ENCODE measurements at regions of chr20 and their contacts with region 1.

Region 1: DNA sequence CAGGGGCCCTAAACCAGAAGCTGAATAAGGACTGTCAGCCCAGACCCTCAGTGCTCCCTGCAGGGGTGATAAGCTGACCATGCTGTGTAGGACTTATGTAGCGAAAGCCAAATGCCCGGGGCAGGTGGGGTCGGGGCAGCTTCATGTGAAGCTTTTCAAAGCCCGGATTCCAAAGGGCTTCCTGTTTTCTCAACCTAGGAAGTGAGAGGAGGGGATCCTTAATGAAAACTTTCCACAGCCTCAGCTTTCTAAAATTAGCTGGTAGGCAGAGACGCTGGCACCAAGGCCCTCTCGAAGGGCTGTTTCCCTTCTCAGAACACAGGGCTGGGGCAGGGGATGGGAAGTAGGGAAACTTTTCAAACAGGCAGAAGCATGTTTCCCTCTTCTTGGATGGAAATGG is 148.9 kb downstream of the NFATC2 start:
- DNase-seq: peak; percentile 28
- ATAC-seq: peak; percentile 27 to 76 (median 43)
- H3K4me3 ChIP-seq: no peak overlapping the region
- H3K27ac ChIP-seq: peak overlapping the region in 7 of 10 donors; percentile 24 to 61 (median 49)
- H3K4me1 ChIP-seq: peaks cover 6 to 86% (median 49%) of the 10 kb centered on the region in 9 donors
- H3K27me3 ChIP-seq: no peaks in the 10 kb centered on the region
- CTCF ChIP-seq: no peak

Region 2: GRCh38 chr20:51492167-51493092 is 98.9 kb after region 1 on chr20:
- intact Hi-C with region 1: loop called in 3 of 10 experiments (anchors 1 to 10 kb)
- DNase-seq: peak; percentile 68 to 82
- ATAC-seq: peak; percentile 67 to 92 (median 86)
- H3K4me3 ChIP-seq: peak overlapping the region in 9 of 10 donors; percentile 23 to 50 (median 39)
- H3K27ac ChIP-seq: peak overlapping the region in 8 of 10 donors; percentile 1 to 55 (median 40)
- H3K4me1 ChIP-seq: peaks cover 9 to 56% (median 25%) of the 10 kb centered on the region in 9 donors
- H3K27me3 ChIP-seq: peaks cover 0 to 11% (median 0%) of the 10 kb centered on the region in 7 donors
- CTCF ChIP-seq: no peak

Region 3: DNA sequence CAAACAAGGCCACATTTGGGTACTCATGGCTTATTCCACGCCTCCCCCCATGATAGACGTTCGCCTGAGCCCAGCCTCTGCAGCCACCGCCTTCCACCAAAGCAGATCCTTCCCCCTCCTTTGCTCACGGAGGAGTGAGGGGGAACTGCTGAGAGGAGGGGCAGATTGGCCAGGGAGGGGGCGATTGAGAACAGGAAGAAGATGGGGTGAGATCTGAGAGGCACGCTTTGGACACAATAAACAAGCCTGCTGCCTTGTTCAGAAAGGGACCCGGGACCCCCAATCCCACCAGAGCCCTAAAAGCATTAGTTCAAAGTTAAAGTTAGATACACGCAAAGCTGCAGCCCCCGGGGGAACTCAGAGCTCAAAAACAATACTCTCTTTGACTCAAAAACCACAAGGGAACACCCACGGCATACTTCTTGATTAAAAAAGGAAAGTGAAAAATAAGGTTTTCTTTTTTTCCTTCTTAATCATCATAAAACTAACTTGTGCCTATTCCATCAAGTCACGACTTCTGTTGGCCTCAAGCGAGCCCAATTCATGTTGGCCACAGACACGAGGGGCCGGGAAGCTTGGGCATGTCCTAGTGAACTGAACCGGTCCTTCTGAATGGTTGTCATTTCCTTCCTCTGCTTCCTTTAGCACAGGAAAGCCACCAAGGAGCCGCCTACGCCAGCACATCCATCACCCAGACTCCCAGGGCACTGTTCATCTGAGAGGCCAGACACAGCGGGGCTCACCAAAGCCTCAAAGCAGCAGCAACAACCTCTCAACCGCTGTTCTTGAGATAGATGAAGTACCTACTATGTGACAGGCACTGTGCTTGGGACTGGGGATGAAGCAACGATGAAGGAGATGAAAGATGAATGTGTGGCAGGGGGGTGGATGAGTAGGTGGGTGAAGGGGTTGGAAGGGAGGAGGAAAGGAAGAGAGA is 104.2 kb after region 1 on chr20:
- intact Hi-C with region 1: loop called in 2 of 10 experiments (anchors 5 to 10 kb)
- DNase-seq: peak in 1 of 2 donors; percentile 30
- ATAC-seq: peak in 6 of 8 donors; percentile 44 to 71 (median 57)
- H3K4me3 ChIP-seq: peak overlapping the region in 2 of 10 donors; percentile 13 to 25
- H3K27ac ChIP-seq: peak overlapping the region in 5 of 10 donors; percentile 13 to 69 (median 24)
- H3K4me1 ChIP-seq: peaks cover 4 to 80% (median 28%) of the 10 kb centered on the region in 9 donors
- H3K27me3 ChIP-seq: peaks cover 0 to 11% (median 0%) of the 10 kb centered on the region in 7 donors
- CTCF ChIP-seq: no peak

Region 4: GRCh38 chr20:51541189-51542032 is 147.8 kb after region 1 on chr20:
- intact Hi-C with region 1: loop called in 4 of 10 experiments (anchors 2 to 5 kb)
- DNase-seq: peak; percentile 67 to 92
- ATAC-seq: peak; percentile 87 to 96 (median 92)
- H3K4me3 ChIP-seq: peak overlapping the region in 9 of 10 donors; percentile 34 to 61 (median 50)
- H3K27ac ChIP-seq: peak overlapping the region; percentile 51 to 92 (median 80)
- H3K4me1 ChIP-seq: peaks cover 16 to 45% (median 35%) of the 10 kb centered on the region in 9 donors
- H3K27me3 ChIP-seq: peaks cover 0 to 35% (median 0%) of the 10 kb centered on the region in 7 donors
- CTCF ChIP-seq: peak in 1 of 9 donors; percentile 19

Region 5: GRCh38 chr20:51547951-51548350 is 154.4 kb after region 1 on chr20:
- intact Hi-C with region 1: loop called in 3 of 10 experiments (anchors 5 kb)
- DNase-seq: no peak
- ATAC-seq: no peak
- H3K4me3 ChIP-seq: no peak overlapping the region
- H3K27ac ChIP-seq: no peak overlapping the region
- H3K4me1 ChIP-seq: peaks cover under 1 to 7% (median 4%) of the 10 kb centered on the region in 9 donors
- H3K27me3 ChIP-seq: peaks cover 0 to 21% (median 0%) of the 10 kb centered on the region in 7 donors
- CTCF ChIP-seq: no peak